ENCODE measurements at regions of chr14 and their contacts with region 1.

Region 1: GRCh38 chr14:39015360-39015961 is 87.6 kb downstream of the SEC23A start:
- ATAC-seq: peak in 3 of 8 experiments; percentile 28 to 50 (median 39)
- H3K4me3 ChIP-seq: no peak overlapping the region
- H3K27ac ChIP-seq: no peak overlapping the region
- H3K4me1 ChIP-seq: peaks cover 5 to 9% of the 10 kb centered on the region in 2 donors

Region 2: GRCh38 chr14:38721822-38722431 is 293.5 kb before region 1 on chr14:
- in situ Hi-C with region 1: loop called in 2 of 9 experiments (anchors 10 to 25 kb)
- ATAC-seq: peak in 5 of 8 experiments; percentile 29 to 94 (median 88)
- H3K4me3 ChIP-seq: no peak overlapping the region
- H3K27ac ChIP-seq: no peak overlapping the region
- H3K4me1 ChIP-seq: peaks cover 0 to 2% of the 10 kb centered on the region in 2 donors

Region 3: DNA sequence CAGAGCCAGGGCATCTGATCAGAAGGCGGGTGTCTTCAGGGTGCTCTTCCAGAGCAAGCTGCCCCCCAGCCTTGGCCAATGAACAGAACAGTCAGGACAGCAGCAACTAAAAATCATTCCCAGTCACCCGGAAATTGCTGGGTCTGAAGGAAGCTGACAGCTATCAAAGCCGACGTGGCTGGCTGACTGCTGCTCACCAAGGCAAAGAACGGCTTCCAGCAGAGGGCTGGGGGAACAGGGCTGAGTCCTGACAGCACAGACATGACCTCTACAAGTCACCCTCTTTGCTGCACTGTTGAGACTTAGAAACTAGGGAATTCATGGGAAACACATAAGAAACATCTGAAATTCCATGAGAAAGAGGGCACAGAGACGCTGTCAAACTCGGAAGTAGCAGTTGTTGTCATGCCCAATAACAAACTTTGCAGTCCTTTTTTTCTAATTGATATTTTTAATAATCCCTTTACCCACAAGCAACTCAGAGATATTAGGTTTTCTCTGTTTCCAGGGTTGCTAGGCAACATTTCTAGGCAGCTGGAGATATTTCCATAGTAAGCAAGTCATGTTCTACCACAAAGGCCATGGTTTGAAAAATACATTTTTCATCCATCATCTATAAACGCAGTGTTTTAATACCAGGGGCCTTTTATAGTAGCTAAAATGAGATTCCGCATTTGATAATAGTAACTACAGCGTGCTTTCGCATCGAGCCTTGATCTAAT is 277.6 kb before region 1 on chr14:
- in situ Hi-C with region 1: loop called in 1 of 9 experiments (anchors 25 kb)
- ATAC-seq: peak in 5 of 8 experiments; percentile 73 to 95 (median 81)
- H3K4me3 ChIP-seq: no peak overlapping the region
- H3K27ac ChIP-seq: peak overlapping the region; percentile 47 to 52
- H3K4me1 ChIP-seq: peaks cover 15 to 18% of the 10 kb centered on the region in 2 donors

Region 4: GRCh38 chr14:38880643-38881524 is 134.6 kb before region 1 on chr14:
- in situ Hi-C with region 1: loop called in 1 of 9 experiments (anchors 25 kb)
- ATAC-seq: no peak
- H3K4me3 ChIP-seq: no peak overlapping the region
- H3K27ac ChIP-seq: no peak overlapping the region
- H3K4me1 ChIP-seq: no peaks in the 10 kb centered on the region

Measured in motor neuron (in vitro differentiated cells).